Heart right ventricle (tissue), 16 donors: ENCODE measurements at regions of chr17 and their contacts with region 1.

Region 1: GRCh38 chr17:44110823-44111633 is 12.4 kb downstream of the HDAC5 start:
- DNase-seq: peak; percentile 99 to 100
- ATAC-seq: peak; percentile 79 to 90 (median 85)
- H3K4me3 ChIP-seq: peak overlapping the region; percentile 37 to 67 (median 60)
- H3K27ac ChIP-seq: peak overlapping the region; percentile 86 to 98 (median 92)
- H3K4me1 ChIP-seq: peaks cover 67 to 99% (median 96%) of the 10 kb centered on the region in 9 donors
- H3K27me3 ChIP-seq: no peaks in the 10 kb centered on the region
- CTCF ChIP-seq: no peak

Region 2: GRCh38 chr17:44006598-44007345 is 104.3 kb before region 1 on chr17:
- intact Hi-C with region 1: loop called in 3 of 10 experiments (anchors 5 to 10 kb)
- DNase-seq: peak; percentile 97 to 99
- ATAC-seq: peak; percentile 89 to 96 (median 93)
- H3K4me3 ChIP-seq: peak overlapping the region; percentile 27 to 77 (median 64)
- H3K27ac ChIP-seq: peak overlapping the region in 6 of 10 donors; percentile 18 to 75 (median 39)
- H3K4me1 ChIP-seq: peaks cover 18 to 55% (median 41%) of the 10 kb centered on the region in 9 donors
- H3K27me3 ChIP-seq: peaks cover 14 to 43% (median 25%) of the 10 kb centered on the region in 7 donors
- CTCF ChIP-seq: peak; percentile 32 to 70 (median 56)

Region 3: GRCh38 chr17:44014437-44015172 is 96.4 kb before region 1 on chr17 and contains the start of gene TMEM101:
- intact Hi-C with region 1: loop called in 4 of 10 experiments (anchors 5 to 10 kb)
- DNase-seq: peak; percentile 87 to 93
- ATAC-seq: peak; percentile 83 to 97 (median 94)
- H3K4me3 ChIP-seq: peak within 1 kb of the TSS; percentile 61 to 99 (median 76)
- H3K27ac ChIP-seq: peak within 1 kb of the TSS in 9 of 10 donors; percentile 57 to 92 (median 78)
- H3K4me1 ChIP-seq: peaks cover 0 to 46% (median 28%) of the 10 kb centered on the region in 9 donors
- H3K27me3 ChIP-seq: no peaks in the 10 kb centered on the region
- CTCF ChIP-seq: no peak
- total RNA-seq, gene TMEM101: 15.6 to 22.1 (median 17.9) TPM

Region 4: GRCh38 chr17:44095642-44096496 is 15.2 kb before region 1 on chr17:
- intact Hi-C with region 1: loop called in 1 of 10 experiments (anchors 2 kb)
- DNase-seq: peak; percentile 64 to 90
- ATAC-seq: peak; percentile 26 to 88 (median 82)
- H3K4me3 ChIP-seq: peak overlapping the region in 9 of 10 donors; percentile 10 to 50 (median 38)
- H3K27ac ChIP-seq: peak overlapping the region; percentile 83 to 97 (median 92)
- H3K4me1 ChIP-seq: peaks cover 20 to 78% (median 56%) of the 10 kb centered on the region in 9 donors
- H3K27me3 ChIP-seq: no peaks in the 10 kb centered on the region
- CTCF ChIP-seq: peak in 5 of 9 donors; percentile 15 to 57 (median 31)

Region 5: DNA sequence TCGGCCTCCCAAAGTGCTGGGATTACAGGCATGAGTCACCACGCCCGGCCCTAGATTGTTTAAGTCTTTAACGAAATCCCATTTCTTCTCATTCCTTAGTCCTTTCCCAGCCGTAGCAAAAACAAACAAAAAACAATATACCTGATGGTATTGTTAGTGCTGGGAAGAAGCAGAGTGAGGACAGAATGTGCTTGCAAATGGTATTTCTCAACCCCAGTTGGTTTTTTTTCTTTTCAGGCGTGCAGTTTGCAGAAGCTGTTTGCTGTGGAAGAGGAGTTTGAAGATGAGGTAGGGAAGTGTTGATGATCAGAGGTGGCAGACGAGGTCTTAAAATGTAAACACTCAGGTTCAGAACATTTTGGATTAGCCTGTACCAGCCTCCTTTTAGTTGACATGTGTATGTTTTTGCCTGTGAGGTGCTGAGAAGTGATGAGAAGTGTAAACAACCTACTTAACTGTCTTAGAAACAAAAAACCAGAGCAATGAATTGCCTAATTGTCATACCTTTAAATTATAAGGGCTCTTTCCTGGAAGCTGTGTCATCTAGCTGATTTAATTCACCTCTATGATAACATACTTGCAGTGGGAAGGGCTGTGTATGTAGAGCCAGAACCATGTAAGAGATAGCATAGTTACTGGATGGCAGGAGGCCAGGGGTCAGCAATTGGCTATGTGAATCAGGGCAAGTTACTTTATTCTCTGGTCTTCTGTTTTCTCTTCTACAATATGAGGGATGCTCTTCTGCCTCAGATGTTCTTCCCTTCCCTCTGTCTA is 34.1 kb after region 1 on chr17:
- intact Hi-C with region 1: no loop called
- DNase-seq: peak in 1 of 2 donors; percentile 30
- ATAC-seq: peak in 2 of 8 donors; percentile 38 to 44
- H3K4me3 ChIP-seq: no peak overlapping the region
- H3K27ac ChIP-seq: peak overlapping the region in 9 of 10 donors; percentile 37 to 86 (median 79)
- H3K4me1 ChIP-seq: peaks cover 0 to 55% (median 21%) of the 10 kb centered on the region in 9 donors
- H3K27me3 ChIP-seq: no peaks in the 10 kb centered on the region
- CTCF ChIP-seq: no peak

Region 6: GRCh38 chr17:44363613-44364159 is 252.7 kb after region 1 on chr17 and contains the start of gene FAM171A2:
- intact Hi-C with region 1: no loop called
- DNase-seq: peak in 1 of 2 donors; percentile 73
- ATAC-seq: peak; percentile 55 to 89 (median 76)
- H3K4me3 ChIP-seq: peak within 1 kb of the TSS; percentile 46 to 78 (median 66)
- H3K27ac ChIP-seq: peak within 1 kb of the TSS in 6 of 10 donors; percentile 22 to 73 (median 40)
- H3K4me1 ChIP-seq: peaks cover 0 to 32% (median 17%) of the 10 kb centered on the region in 9 donors
- H3K27me3 ChIP-seq: peaks cover 0 to 41% (median 6%) of the 10 kb centered on the region in 7 donors
- CTCF ChIP-seq: peak; percentile 54 to 96 (median 83)
- total RNA-seq, gene FAM171A2: 0.25 to 0.95 (median 0.46) TPM